B cell (primary cell): ENCODE measurements at regions of chr12 and their contacts with region 1.

Region 1: DNA sequence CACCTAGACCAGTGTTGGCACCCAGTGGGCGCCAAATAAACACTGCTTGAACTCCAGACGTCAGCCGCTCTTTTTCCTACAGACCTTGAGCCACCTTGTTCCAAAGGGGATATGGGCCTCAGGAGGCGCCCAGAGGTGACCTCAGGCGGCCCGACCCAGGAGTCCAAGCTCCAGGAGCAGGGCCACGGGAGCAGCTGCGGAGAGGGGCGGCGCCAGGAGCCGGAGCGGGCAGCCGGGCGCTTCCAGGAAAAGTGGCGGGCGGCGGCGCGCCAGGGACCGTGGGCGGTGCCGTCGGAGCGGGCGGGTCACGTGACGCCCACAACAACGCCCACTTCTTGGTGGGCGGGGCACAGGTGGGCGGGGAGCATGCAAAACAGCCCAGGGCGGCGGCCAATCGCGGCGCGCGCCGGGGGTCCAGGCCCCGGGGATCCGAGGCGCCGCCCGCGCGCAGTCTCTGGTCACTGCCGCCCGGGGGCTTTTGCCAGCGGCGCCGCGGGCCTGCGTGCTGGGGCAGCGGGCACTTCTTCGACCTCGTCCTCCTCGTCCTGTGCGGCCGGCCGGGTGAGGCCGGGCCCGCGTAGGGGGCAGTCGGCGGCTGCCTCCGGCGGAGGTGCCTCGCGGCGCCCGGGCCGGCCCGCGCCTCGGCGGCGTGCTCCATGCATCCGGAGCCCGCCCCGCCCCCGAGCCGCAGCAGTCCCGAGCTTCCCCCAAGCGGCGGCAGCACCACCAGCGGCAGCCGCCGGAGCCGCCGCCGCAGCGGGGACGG is at the start of gene ORAI1:
- DNase-seq: peak; percentile 97
- ATAC-seq: peak; percentile 76
- H3K4me3 ChIP-seq: peak within 1 kb of the TSS; percentile 61 to 93 (median 82)
- H3K4me3 Mint-ChIP-seq: peak within 1 kb of the TSS; percentile 96
- H3K27ac ChIP-seq: peak within 1 kb of the TSS; percentile 87 to 91
- H3K27ac Mint-ChIP-seq: peak within 1 kb of the TSS; percentile 96
- H3K4me1 ChIP-seq: peaks cover 40 to 50% of the 10 kb centered on the region in 2 donors
- H3K4me1 Mint-ChIP-seq: peaks cover 48% of the 10 kb centered on the region
- H3K27me3 ChIP-seq: no peaks in the 10 kb centered on the region
- H3K27me3 Mint-ChIP-seq: no peaks in the 10 kb centered on the region
- CTCF ChIP-seq: no peak
- total RNA-seq, gene ORAI1: 43.2 and 44.2 TPM in 2 replicates

Region 2: GRCh38 chr12:121499929-121500793 is 126.1 kb before region 1 on chr12:
- CTCF ChIA-PET with region 1: interaction called, 77 read pairs
- POLR2A ChIA-PET with region 1: interaction called, 3 read pairs
- intact Hi-C with region 1: loop called (anchors 1 kb)
- DNase-seq: peak; percentile 82
- ATAC-seq: peak; percentile 91
- H3K4me3 ChIP-seq: no peak overlapping the region
- H3K4me3 Mint-ChIP-seq: no peak overlapping the region
- H3K27ac ChIP-seq: no peak overlapping the region
- H3K27ac Mint-ChIP-seq: no peak overlapping the region
- H3K4me1 ChIP-seq: peaks cover 10 to 19% of the 10 kb centered on the region in 2 donors
- H3K4me1 Mint-ChIP-seq: peaks cover 16% of the 10 kb centered on the region
- H3K27me3 ChIP-seq: no peaks in the 10 kb centered on the region
- H3K27me3 Mint-ChIP-seq: no peaks in the 10 kb centered on the region
- CTCF ChIP-seq: peak; percentile 99

Region 3: DNA sequence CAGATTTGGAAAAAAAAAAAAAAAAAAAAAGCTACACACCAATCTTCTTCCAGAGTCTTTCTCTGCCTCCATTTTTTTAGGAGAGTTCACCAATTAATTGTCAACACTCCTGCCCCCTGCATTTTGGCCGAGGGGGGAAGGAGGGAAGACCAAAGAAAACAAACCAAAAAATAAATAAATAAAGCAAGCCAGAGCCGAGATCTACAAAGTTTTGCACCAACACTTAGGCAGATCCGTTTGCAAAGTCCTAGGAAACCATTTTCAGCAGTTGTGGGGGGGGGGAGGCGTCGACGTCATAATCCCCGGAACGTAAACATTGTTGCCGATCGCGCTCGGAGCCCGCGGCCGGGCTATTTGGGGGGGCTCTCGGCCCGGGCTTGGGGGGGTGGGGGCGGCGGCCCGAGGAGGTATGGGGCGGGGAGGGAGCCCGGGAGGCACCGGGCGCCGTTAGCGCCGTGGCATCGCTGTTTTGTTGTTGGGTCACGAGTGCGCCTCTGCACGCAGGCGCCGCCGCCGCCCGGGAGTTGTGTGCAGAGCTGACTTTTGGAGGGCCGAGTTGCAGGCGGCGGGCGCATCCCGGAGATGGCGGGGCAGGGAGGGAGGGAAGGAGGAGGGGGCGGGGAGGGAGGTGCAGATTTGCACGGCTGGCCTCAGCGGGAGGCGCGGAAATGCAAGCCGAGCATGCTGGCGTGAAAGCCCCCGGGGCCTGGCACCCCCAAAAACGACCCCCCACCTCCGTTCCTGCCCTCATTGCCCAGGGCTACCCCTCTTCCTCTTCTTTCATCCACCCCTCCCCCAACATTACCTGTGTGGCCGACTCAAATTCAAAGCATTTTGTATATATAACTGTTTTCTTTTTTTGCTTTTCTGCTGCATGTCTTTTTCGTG is 46.0 kb before region 1 on chr12:
- CTCF ChIA-PET with region 1: interaction called, 72 read pairs
- POLR2A ChIA-PET with region 1: interaction called, 59 read pairs
- intact Hi-C with region 1: loop called (anchors 1 kb)
- DNase-seq: peak; percentile 79
- ATAC-seq: peak; percentile 55
- H3K4me3 ChIP-seq: peak overlapping the region; percentile 57 to 93 (median 65)
- H3K4me3 Mint-ChIP-seq: peak overlapping the region; percentile 94
- H3K27ac ChIP-seq: peak overlapping the region; percentile 69 to 77
- H3K27ac Mint-ChIP-seq: peak overlapping the region; percentile 94
- H3K4me1 ChIP-seq: peaks cover 23 to 47% of the 10 kb centered on the region in 2 donors
- H3K4me1 Mint-ChIP-seq: peaks cover 34% of the 10 kb centered on the region
- H3K27me3 ChIP-seq: no peaks in the 10 kb centered on the region
- H3K27me3 Mint-ChIP-seq: no peaks in the 10 kb centered on the region
- CTCF ChIP-seq: no peak

Region 4: GRCh38 chr12:121637231-121637914 is 11.1 kb after region 1 on chr12:
- CTCF ChIA-PET with region 1: interaction called, 38 read pairs
- POLR2A ChIA-PET with region 1: interaction called, 18 read pairs
- intact Hi-C with region 1: loop called (anchors 1 kb)
- DNase-seq: peak; percentile 79
- ATAC-seq: peak; percentile 90
- H3K4me3 ChIP-seq: peak overlapping the region in 4 of 5 experiments; percentile 19 to 46 (median 37)
- H3K4me3 Mint-ChIP-seq: peak overlapping the region; percentile 67
- H3K27ac ChIP-seq: peak overlapping the region; percentile 86 to 89
- H3K27ac Mint-ChIP-seq: peak overlapping the region; percentile 92
- H3K4me1 ChIP-seq: peaks cover 29 to 40% of the 10 kb centered on the region in 2 donors
- H3K4me1 Mint-ChIP-seq: peaks cover 40% of the 10 kb centered on the region
- H3K27me3 ChIP-seq: no peaks in the 10 kb centered on the region
- H3K27me3 Mint-ChIP-seq: no peaks in the 10 kb centered on the region
- CTCF ChIP-seq: no peak

Region 5: DNA sequence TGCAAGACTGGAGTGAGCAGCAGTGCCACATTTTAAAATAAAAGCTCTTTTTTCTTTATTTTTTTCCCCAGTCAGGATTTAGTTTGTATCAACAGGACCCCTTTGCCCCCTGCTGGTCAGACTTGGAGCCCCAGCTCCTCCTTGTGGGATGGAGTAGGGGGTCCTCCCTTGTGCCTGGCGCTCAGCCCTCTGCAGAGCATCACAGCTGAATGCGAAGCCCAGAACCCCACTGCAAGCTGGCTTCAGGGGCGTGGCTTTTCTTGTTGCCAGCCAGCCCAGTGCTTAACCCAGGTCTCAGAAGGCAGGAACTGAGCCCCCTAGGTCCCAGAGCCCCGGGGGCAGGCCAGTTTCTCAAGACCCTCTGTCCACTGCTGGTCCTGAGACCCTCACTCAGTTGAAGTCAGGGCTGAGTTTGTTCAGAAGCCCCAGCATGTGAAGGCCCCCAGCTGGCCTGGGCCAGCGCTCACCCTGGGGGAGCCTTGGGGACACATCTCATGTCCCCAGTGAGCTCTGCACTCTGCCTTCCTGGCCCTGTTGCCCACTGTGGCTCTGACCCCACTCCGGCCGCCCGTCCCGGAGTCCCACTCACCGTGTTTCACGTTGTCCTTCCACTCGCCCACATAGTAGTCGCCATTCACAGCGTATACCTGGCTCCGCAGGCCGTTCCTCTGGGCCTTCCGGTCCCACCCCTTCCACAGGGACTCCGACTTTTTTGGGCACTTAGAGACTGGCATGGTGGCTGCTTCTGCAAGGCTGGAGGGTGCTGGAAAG is 42.7 kb after region 1 on chr12:
- CTCF ChIA-PET with region 1: interaction called, 53 read pairs
- POLR2A ChIA-PET with region 1: interaction called, 19 read pairs
- intact Hi-C with region 1: loop called (anchors 1 kb)
- DNase-seq: peak; percentile 67
- ATAC-seq: no peak
- H3K4me3 ChIP-seq: no peak overlapping the region
- H3K4me3 Mint-ChIP-seq: no peak overlapping the region
- H3K27ac ChIP-seq: no peak overlapping the region
- H3K27ac Mint-ChIP-seq: peak overlapping the region; percentile 61
- H3K4me1 ChIP-seq: peaks cover 30 to 52% of the 10 kb centered on the region in 2 donors
- H3K4me1 Mint-ChIP-seq: peaks cover 42% of the 10 kb centered on the region
- H3K27me3 ChIP-seq: no peaks in the 10 kb centered on the region
- H3K27me3 Mint-ChIP-seq: no peaks in the 10 kb centered on the region
- CTCF ChIP-seq: peak; percentile 78

Region 6: GRCh38 chr12:121688966-121689365 is 62.7 kb after region 1 on chr12:
- CTCF ChIA-PET with region 1: interaction called, 39 read pairs
- POLR2A ChIA-PET with region 1: interaction called, 3 read pairs
- intact Hi-C with region 1: loop called (anchors 1 kb)
- DNase-seq: no peak
- ATAC-seq: no peak
- H3K4me3 ChIP-seq: no peak overlapping the region
- H3K4me3 Mint-ChIP-seq: no peak overlapping the region
- H3K27ac ChIP-seq: no peak overlapping the region
- H3K27ac Mint-ChIP-seq: peak overlapping the region; percentile 10
- H3K4me1 ChIP-seq: peaks cover 4 to 16% of the 10 kb centered on the region in 2 donors
- H3K4me1 Mint-ChIP-seq: peaks cover 8% of the 10 kb centered on the region
- H3K27me3 ChIP-seq: no peaks in the 10 kb centered on the region
- H3K27me3 Mint-ChIP-seq: no peaks in the 10 kb centered on the region
- CTCF ChIP-seq: no peak